ENCODE measurements at regions of chr12 and their contacts with region 1.

Region 1: GRCh38 chr12:10771132-10771733 is 31.2 kb downstream of the TAS2R7 start:
- DNase-seq: no peak
- H3K4me3 Mint-ChIP-seq: no peak overlapping the region
- H3K27ac Mint-ChIP-seq: no peak overlapping the region
- H3K4me1 Mint-ChIP-seq: no peaks in the 10 kb centered on the region
- H3K27me3 Mint-ChIP-seq: peaks cover 56% of the 10 kb centered on the region

Region 2: DNA sequence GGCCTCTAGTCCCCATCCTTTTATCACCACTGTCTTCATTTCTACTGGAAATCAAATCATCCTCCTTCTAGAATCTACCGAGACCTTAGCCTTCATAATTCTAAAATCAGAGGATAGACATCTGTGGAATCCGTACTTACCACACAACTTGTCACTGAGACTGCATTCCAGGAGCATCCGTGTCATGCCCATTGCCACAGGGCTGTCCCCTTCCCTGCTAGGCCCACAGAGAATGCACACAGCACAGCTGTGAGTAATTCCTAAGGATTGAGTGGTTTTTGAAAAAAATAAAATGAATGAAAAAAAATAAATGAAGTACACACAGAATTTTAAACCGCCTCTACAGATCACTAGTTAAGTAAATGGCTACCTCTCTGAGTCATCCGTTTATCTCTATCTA is 136.8 kb before region 1 on chr12:
- intact Hi-C with region 1: no loop called
- DNase-seq: no peak
- H3K4me3 Mint-ChIP-seq: no peak overlapping the region
- H3K27ac Mint-ChIP-seq: no peak overlapping the region
- H3K4me1 Mint-ChIP-seq: no peaks in the 10 kb centered on the region
- H3K27me3 Mint-ChIP-seq: peaks cover 33% of the 10 kb centered on the region

Region 3: DNA sequence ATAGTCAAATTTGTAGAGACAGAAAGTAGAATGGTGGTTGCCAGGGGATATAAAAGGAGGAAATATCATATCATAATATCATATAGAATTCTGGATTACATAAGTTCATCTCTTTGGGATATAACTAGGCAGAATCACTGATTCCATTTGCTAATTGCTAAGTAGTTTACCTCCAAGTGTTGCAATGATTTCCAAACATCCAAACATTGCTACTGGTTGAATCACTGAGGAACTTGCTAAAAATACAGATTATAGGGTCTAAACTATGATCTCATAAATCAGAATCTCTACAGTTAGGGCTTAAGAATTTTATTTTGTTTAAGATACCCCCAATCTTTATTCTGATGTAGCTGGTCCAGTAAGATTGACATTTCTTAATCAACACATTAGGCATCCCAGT is 431.6 kb after region 1 on chr12:
- intact Hi-C with region 1: loop called (anchors 1 kb)
- DNase-seq: no peak
- H3K4me3 Mint-ChIP-seq: no peak overlapping the region
- H3K27ac Mint-ChIP-seq: no peak overlapping the region
- H3K4me1 Mint-ChIP-seq: no peaks in the 10 kb centered on the region
- H3K27me3 Mint-ChIP-seq: peaks cover 5% of the 10 kb centered on the region